ENCODE measurements at regions of chr3 and their contacts with region 1.

Region 1: GRCh38 chr3:13275376-13276005 is 144.6 kb downstream of the NUP210 start:
- DNase-seq: no peak
- ATAC-seq: no peak
- H3K4me3 ChIP-seq: no peak overlapping the region
- H3K4me3 Mint-ChIP-seq: no peak overlapping the region
- H3K27ac ChIP-seq: no peak overlapping the region
- H3K27ac Mint-ChIP-seq: no peak overlapping the region
- H3K4me1 ChIP-seq: no peaks in the 10 kb centered on the region
- H3K4me1 Mint-ChIP-seq: no peaks in the 10 kb centered on the region
- H3K27me3 ChIP-seq: peaks cover 0 to 52% of the 10 kb centered on the region in 2 experiments
- H3K27me3 Mint-ChIP-seq: peaks cover 14 to 21% of the 10 kb centered on the region in 2 donors

Region 2: GRCh38 chr3:13296662-13297061 is 21.2 kb after region 1 on chr3:
- CTCF ChIA-PET with region 1: interaction called in 1 of 2 experiments, 12 read pairs
- POLR2A ChIA-PET with region 1: no interaction called
- DNase-seq: no peak
- ATAC-seq: no peak
- H3K4me3 ChIP-seq: no peak overlapping the region
- H3K4me3 Mint-ChIP-seq: no peak overlapping the region
- H3K27ac ChIP-seq: no peak overlapping the region
- H3K27ac Mint-ChIP-seq: peak overlapping the region in 1 of 2 donors; percentile 36
- H3K4me1 ChIP-seq: peaks cover 0 to 5% of the 10 kb centered on the region in 2 experiments
- H3K4me1 Mint-ChIP-seq: peaks cover 0 to 6% (median 5%) of the 10 kb centered on the region in 3 donors
- H3K27me3 ChIP-seq: peaks cover 0 to 37% of the 10 kb centered on the region in 2 experiments
- H3K27me3 Mint-ChIP-seq: peaks cover 23 to 42% of the 10 kb centered on the region in 2 donors

Region 3: GRCh38 chr3:13470894-13471574 is 195.5 kb after region 1 on chr3:
- CTCF ChIA-PET with region 1: no interaction called
- POLR2A ChIA-PET with region 1: no interaction called
- DNase-seq: no peak
- ATAC-seq: no peak
- H3K4me3 ChIP-seq: no peak overlapping the region
- H3K4me3 Mint-ChIP-seq: no peak overlapping the region
- H3K27ac ChIP-seq: no peak overlapping the region
- H3K27ac Mint-ChIP-seq: no peak overlapping the region
- H3K4me1 ChIP-seq: no peaks in the 10 kb centered on the region
- H3K4me1 Mint-ChIP-seq: no peaks in the 10 kb centered on the region
- H3K27me3 ChIP-seq: peaks cover 2 to 23% of the 10 kb centered on the region in 2 experiments
- H3K27me3 Mint-ChIP-seq: peaks cover 0 to 7% of the 10 kb centered on the region in 2 donors

Measured in T-cell (primary cell).